ENCODE measurements at regions of chr17 and their contacts with region 1.

Region 1: DNA sequence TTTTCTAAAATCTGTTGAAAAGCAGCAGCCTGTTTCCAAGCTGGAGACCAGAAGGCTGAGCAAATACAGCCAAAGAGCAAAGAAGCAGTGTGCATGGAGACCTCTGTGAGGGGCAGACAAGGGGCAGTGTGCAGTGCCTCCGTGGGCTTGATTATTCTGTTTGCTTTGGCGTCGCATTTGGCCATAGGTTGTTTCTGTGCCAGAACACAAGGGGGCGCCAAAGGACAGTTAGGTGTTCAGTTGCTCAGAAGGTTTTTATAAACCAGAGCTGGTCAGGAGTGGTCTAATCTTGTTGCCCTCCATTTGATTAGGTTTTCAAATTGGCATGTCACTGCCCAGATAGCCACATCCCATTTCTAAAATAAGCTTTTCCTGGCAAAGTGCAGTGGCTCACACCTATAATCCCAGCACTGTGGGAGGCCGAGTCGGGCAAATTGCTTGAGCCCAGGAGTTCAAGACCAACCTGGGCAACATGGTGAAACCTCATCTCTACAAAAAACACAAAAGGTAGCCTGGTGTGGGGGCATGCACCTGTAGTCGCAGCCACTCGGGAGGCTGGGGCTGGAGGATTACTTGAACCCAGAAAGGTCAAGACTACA is 10.6 kb downstream of the MYH3 start:
- DNase-seq: peak; percentile 50 to 74 (median 61)
- H3K4me3 ChIP-seq: no peak overlapping the region
- H3K4me3 Mint-ChIP-seq: no peak overlapping the region
- H3K27ac ChIP-seq: no peak overlapping the region
- H3K27ac Mint-ChIP-seq: no peak overlapping the region
- H3K4me1 ChIP-seq: no peaks in the 10 kb centered on the region
- H3K4me1 Mint-ChIP-seq: no peaks in the 10 kb centered on the region
- H3K27me3 ChIP-seq: no peaks in the 10 kb centered on the region
- H3K27me3 Mint-ChIP-seq: no peaks in the 10 kb centered on the region

Region 2: GRCh38 chr17:10618202-10618635 is 28.3 kb before region 1 on chr17:
- CTCF ChIA-PET with region 1: interaction called, 26 read pairs
- POLR2A ChIA-PET with region 1: no interaction called
- DNase-seq: peak; percentile 25 to 61 (median 33)
- H3K4me3 ChIP-seq: no peak overlapping the region
- H3K4me3 Mint-ChIP-seq: no peak overlapping the region
- H3K27ac ChIP-seq: no peak overlapping the region
- H3K27ac Mint-ChIP-seq: no peak overlapping the region
- H3K4me1 ChIP-seq: no peaks in the 10 kb centered on the region
- H3K4me1 Mint-ChIP-seq: peaks cover 0 to 3% (median 0%) of the 10 kb centered on the region in 3 donors
- H3K27me3 ChIP-seq: no peaks in the 10 kb centered on the region
- H3K27me3 Mint-ChIP-seq: peaks cover 6 to 9% of the 10 kb centered on the region in 2 donors

Region 3: GRCh38 chr17:10631048-10631700 is 15.3 kb before region 1 on chr17:
- CTCF ChIA-PET with region 1: interaction called, 26 read pairs
- POLR2A ChIA-PET with region 1: no interaction called
- DNase-seq: peak in 1 of 5 donors; percentile 18
- H3K4me3 ChIP-seq: no peak overlapping the region
- H3K4me3 Mint-ChIP-seq: no peak overlapping the region
- H3K27ac ChIP-seq: no peak overlapping the region
- H3K27ac Mint-ChIP-seq: peak overlapping the region in 1 of 8 donors; percentile 23
- H3K4me1 ChIP-seq: no peaks in the 10 kb centered on the region
- H3K4me1 Mint-ChIP-seq: peaks cover 0 to 3% (median 3%) of the 10 kb centered on the region in 3 donors
- H3K27me3 ChIP-seq: no peaks in the 10 kb centered on the region
- H3K27me3 Mint-ChIP-seq: no peaks in the 10 kb centered on the region

Region 4: DNA sequence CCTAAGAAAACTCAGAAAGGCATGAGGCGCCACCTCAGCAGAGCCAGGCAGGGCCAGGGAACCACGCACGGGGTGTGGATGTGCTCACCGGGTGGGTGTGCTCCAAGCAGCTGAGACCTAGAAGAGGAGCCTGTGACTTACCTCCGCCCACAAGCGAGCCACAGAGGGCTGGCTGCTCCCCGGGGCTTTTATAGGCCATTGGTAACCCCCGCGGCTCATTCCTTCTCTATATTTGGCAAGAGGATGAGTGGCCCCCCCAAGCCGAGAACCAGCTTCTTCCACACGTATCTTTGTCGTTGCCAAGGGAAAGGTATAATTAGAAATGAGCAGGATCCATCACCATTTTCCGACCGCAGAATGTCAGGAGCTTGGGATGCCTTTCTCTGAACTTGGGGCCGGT is 10.7 kb after region 1 on chr17 and contains the start of gene MYH3:
- CTCF ChIA-PET with region 1: interaction called, 13 read pairs
- POLR2A ChIA-PET with region 1: no interaction called
- DNase-seq: no peak
- H3K4me3 ChIP-seq: no peak within 1 kb of the TSS
- H3K4me3 Mint-ChIP-seq: no peak within 1 kb of the TSS
- H3K27ac ChIP-seq: no peak within 1 kb of the TSS
- H3K27ac Mint-ChIP-seq: no peak within 1 kb of the TSS
- H3K4me1 ChIP-seq: peaks cover 3% of the 10 kb centered on the region
- H3K4me1 Mint-ChIP-seq: peaks cover 7 to 11% (median 9%) of the 10 kb centered on the region in 3 donors
- H3K27me3 ChIP-seq: no peaks in the 10 kb centered on the region
- H3K27me3 Mint-ChIP-seq: peaks cover 0 to 2% of the 10 kb centered on the region in 2 donors
- total RNA-seq, gene MYH3: 2.6 to 3.5 TPM

Region 5: DNA sequence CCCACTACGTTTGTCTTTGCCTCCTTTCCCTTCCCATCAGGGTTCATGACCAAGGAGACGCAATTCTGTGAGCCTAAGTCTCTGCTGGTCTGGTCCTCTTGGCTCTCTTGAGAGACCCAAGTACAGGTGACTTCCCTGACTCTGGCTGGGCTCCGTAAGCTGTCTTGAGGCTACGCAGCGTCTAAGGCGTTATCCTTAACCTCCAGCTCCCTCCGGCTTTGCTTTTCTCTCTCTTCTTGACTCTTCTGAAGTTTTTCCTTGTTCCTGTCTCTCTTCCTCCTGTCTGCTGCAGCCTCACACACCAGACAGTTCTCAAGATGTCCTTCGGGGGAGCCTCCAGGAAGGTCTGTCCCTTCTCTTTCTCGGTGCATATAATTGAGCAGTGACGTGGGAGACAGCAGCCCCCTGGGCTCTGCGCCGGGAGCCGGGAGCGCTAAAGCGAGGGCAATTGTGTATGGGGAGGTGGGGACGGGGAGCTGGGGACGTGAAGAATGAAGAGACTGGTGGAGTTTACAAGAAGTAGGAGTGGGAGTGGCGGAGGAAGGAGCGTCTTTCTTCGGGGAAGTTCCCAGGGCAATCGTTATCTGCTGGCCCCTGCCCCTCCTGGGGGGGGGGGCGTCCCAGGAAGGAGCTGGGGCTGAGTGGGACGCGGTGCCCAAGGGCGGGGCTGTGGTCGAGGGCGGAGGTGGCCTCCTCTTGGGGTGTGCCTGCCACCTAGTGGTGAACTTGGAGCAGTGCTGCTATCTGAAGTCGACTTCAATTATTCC is 198.3 kb after region 1 on chr17:
- CTCF ChIA-PET with region 1: interaction called, 53 read pairs
- POLR2A ChIA-PET with region 1: no interaction called
- DNase-seq: peak; percentile 43 to 76 (median 54)
- H3K4me3 ChIP-seq: peak overlapping the region; percentile 16
- H3K4me3 Mint-ChIP-seq: peak overlapping the region in 6 of 7 donors; percentile 53 to 89 (median 77)
- H3K27ac ChIP-seq: no peak overlapping the region
- H3K27ac Mint-ChIP-seq: no peak overlapping the region
- H3K4me1 ChIP-seq: no peaks in the 10 kb centered on the region
- H3K4me1 Mint-ChIP-seq: peaks cover 5 to 9% (median 7%) of the 10 kb centered on the region in 3 donors
- H3K27me3 ChIP-seq: no peaks in the 10 kb centered on the region
- H3K27me3 Mint-ChIP-seq: peaks cover 6 to 25% of the 10 kb centered on the region in 2 donors

Measured in CD8-positive, alpha-beta memory T cell (primary cell).